ENCODE measurements at regions of chr5 and their contacts with region 1.

Region 1: DNA sequence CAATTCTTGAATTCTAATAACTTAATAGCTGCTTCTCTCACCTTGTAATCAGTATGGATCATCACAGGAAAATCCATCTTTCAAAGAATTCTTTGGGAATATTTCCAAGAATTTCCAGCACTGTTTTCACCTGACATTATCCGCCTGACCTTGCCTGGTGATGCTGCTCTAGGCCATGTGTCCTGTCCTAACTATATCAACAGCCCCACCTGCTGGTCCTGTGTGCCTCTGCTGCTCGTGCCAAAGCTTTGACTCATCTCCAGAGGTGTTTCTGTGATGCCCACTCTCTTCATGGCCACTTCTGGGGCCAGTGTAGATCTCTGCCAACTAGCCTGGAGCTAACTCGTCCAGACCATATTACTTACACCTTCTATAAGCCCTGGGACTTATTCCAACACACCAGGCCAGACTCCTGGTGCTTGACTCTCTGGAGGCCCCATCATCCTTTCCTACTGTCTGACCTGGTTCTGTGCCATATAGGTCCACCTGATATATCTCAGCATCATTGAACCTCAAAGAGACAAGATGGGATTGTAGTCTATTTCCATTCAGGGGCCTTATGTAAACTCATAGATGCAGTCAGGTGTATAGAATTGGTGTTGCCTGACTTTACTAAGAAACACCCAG is 67.5 kb upstream of the CKMT2 start:
- DNase-seq: peak; percentile 20 to 73 (median 52)
- ATAC-seq: peak; percentile 71
- H3K4me3 ChIP-seq: no peak overlapping the region
- H3K4me3 Mint-ChIP-seq: no peak overlapping the region
- H3K27ac ChIP-seq: no peak overlapping the region
- H3K27ac Mint-ChIP-seq: peak overlapping the region; percentile 45
- H3K4me1 ChIP-seq: no peaks in the 10 kb centered on the region
- H3K4me1 Mint-ChIP-seq: peaks cover 2% of the 10 kb centered on the region
- H3K27me3 ChIP-seq: no peaks in the 10 kb centered on the region
- H3K27me3 Mint-ChIP-seq: no peaks in the 10 kb centered on the region
- CTCF ChIP-seq: peak; percentile 52

Region 2: GRCh38 chr5:80686757-80687156 is 478.8 kb before region 1 on chr5:
- CTCF ChIA-PET with region 1: interaction called, 5 read pairs
- POLR2A ChIA-PET with region 1: no interaction called
- intact Hi-C with region 1: loop called (anchors 1 kb)
- DNase-seq: peak in 2 of 9 experiments; percentile 35 to 50
- ATAC-seq: no peak
- H3K4me3 ChIP-seq: no peak overlapping the region
- H3K4me3 Mint-ChIP-seq: no peak overlapping the region
- H3K27ac ChIP-seq: no peak overlapping the region
- H3K27ac Mint-ChIP-seq: no peak overlapping the region
- H3K4me1 ChIP-seq: no peaks in the 10 kb centered on the region
- H3K4me1 Mint-ChIP-seq: peaks cover 16% of the 10 kb centered on the region
- H3K27me3 ChIP-seq: no peaks in the 10 kb centered on the region
- H3K27me3 Mint-ChIP-seq: no peaks in the 10 kb centered on the region
- CTCF ChIP-seq: peak; percentile 54

Region 3: GRCh38 chr5:80935811-80936385 is 229.7 kb before region 1 on chr5:
- CTCF ChIA-PET with region 1: no interaction called
- POLR2A ChIA-PET with region 1: no interaction called
- intact Hi-C with region 1: loop called in 1 of 2 experiments (anchors 5 kb)
- DNase-seq: peak in 2 of 9 experiments; percentile 16 to 31
- ATAC-seq: peak; percentile 29
- H3K4me3 ChIP-seq: no peak overlapping the region
- H3K4me3 Mint-ChIP-seq: no peak overlapping the region
- H3K27ac ChIP-seq: no peak overlapping the region
- H3K27ac Mint-ChIP-seq: no peak overlapping the region
- H3K4me1 ChIP-seq: no peaks in the 10 kb centered on the region
- H3K4me1 Mint-ChIP-seq: peaks cover 7% of the 10 kb centered on the region
- H3K27me3 ChIP-seq: no peaks in the 10 kb centered on the region
- H3K27me3 Mint-ChIP-seq: no peaks in the 10 kb centered on the region
- CTCF ChIP-seq: no peak